ENCODE measurements at regions of chr11 and their contacts with region 1.

Region 1: GRCh38 chr11:65477149-65477965 is 21.5 kb upstream of the MALAT1 start:
- DNase-seq: peak in 1 of 2 experiments; percentile 91
- H3K4me3 ChIP-seq: peak overlapping the region; percentile 60 to 86 (median 74)
- H3K27ac ChIP-seq: peak overlapping the region; percentile 90
- H3K4me1 ChIP-seq: peaks cover 0 to 20% (median 16%) of the 10 kb centered on the region in 4 experiments; a peak in 5 of 7 replicates
- H3K27me3 ChIP-seq: no peaks in the 10 kb centered on the region
- CTCF ChIP-seq: no peak
- EP300 ChIP-seq: no peak
- POLR2A ChIP-seq: peak; percentile 70 to 88
- RAD21 ChIP-seq: no peak

Region 2: DNA sequence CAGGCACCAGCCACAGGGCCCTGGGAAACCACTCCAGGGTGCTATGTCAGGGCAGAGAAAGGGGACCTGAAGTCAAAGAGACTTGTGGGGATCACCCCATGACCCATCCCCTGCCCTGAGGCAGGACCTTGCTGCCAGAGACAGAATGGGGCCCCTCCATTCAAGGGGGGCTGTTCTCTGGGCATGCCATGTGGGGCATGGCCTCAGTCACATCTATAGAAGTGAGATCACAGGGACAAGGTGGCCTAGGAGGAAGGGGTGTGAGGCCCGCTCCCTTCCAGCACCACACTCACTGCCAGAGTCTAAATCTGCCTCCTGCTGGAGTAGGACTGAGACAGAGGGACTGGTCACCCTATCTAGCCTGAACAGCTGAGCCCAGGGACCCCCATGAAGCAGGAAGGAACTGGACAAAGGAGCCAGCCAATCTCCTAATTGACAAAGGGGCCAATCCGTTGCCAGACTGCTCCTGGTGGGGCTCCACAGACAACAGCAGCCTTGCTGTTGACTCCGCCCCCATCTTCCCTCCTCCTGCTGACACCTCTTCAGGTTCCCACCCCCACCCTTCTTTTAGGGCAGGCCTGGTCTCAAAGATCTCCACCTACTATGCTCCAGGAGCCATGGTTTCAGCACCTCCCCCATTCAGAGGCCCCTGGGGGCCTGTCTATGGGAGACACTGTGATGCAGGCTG is 28.8 kb before region 1 on chr11:
- CTCF ChIA-PET with region 1: interaction called, 11 read pairs
- POLR2A ChIA-PET with region 1: interaction called, 7 read pairs
- DNase-seq: no peak
- H3K4me3 ChIP-seq: no peak overlapping the region
- H3K27ac ChIP-seq: no peak overlapping the region
- H3K4me1 ChIP-seq: no peaks in the 10 kb centered on the region; a peak in 4 of 7 replicates
- H3K27me3 ChIP-seq: no peaks in the 10 kb centered on the region; a peak in 2 of 7 replicates
- CTCF ChIP-seq: no peak
- EP300 ChIP-seq: no peak
- POLR2A ChIP-seq: no peak
- RAD21 ChIP-seq: no peak

Region 3: DNA sequence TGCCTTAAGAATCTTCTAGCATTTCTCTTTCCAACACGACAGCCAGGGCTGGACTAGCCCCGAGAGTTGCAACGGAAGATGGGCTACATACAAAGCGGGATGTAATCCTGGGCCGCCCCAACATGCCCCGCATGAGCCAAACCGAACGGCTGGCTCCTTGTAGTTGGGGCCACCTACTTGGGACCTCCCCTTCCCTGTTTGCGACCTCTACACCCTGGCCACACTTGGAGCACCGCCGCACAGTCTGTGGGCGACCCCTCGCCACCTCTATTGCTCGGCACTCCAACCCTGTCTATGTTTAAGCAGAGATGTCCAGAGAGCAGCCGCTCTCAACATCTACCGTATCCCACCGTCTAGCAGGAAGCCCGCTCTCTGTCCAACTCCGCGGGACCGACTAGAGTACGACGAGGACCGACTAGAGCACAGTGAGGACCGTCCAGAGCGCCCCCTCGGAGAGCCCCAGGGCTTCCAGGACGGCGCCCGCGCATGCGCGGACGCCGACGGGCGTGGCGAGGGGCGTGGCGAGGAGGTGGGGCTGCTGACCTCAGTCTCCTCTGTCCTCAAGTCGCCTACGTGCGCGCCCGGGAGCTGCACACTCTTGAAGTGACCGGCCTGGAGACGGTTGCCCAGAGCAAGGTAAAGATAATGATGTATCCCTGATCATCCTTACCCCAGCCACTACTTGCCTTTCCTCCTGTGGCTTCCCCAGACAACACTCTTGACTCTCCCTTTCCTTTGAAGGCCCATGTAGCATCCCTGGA is 22.5 kb before region 1 on chr11:
- CTCF ChIA-PET with region 1: interaction called, 39 read pairs
- POLR2A ChIA-PET with region 1: interaction called, 6 read pairs
- DNase-seq: peak; percentile 69 to 92
- H3K4me3 ChIP-seq: peak overlapping the region; percentile 46 to 67 (median 54); a peak in 7 of 8 replicates
- H3K27ac ChIP-seq: no peak overlapping the region
- H3K4me1 ChIP-seq: peaks cover 2 to 11% (median 6%) of the 10 kb centered on the region in 4 experiments; a peak in 6 of 7 replicates
- H3K27me3 ChIP-seq: peaks cover 20 to 59% (median 53%) of the 10 kb centered on the region in 4 experiments
- CTCF ChIP-seq: no peak
- EP300 ChIP-seq: no peak
- POLR2A ChIP-seq: peak in 1 of 2 experiments; percentile 29; a peak in 1 of 3 replicates
- RAD21 ChIP-seq: no peak

Measured in H1 (cell line).